WTC11 (cell line): ENCODE measurements at regions of chr11 and their contacts with region 1.

Region 1: DNA sequence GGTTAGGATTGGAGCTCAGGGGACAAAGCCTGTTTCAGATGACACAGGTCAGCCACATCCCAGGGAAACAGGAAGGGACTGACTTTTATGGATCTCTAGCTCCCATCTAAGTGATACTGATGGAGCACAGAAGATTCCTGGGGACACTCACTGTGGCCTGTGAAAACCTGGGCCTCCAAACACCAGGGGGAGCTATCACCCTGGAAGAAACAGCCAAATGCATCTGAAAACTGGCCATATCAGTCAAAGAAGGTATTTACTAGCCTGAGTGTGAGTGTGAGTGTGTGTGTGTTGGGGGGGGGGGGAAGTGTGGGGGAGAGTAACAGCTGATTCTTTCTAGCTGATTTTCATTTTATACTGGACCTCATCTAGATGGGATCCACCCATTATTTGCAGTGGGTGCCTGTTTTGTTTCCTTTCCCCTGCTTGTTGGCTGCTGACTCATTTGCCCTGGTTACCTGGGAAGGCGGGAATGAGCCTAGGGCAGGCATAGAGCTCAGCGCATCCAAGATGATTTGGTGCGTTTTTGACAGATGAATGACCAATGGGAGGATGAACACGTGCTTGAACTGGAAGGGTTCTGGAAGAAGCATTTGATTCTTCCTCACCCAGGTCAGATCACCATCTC is 284.0 kb downstream of the KIRREL3 start:
- DNase-seq: peak; percentile 74
- ATAC-seq: peak; percentile 79
- H3K4me3 Mint-ChIP-seq: no peak overlapping the region
- H3K27ac Mint-ChIP-seq: no peak overlapping the region
- H3K4me1 Mint-ChIP-seq: peaks cover 24% of the 10 kb centered on the region
- H3K27me3 Mint-ChIP-seq: 0 out of 2 replicates have a peak, but pooled peaks cover 4% of the 10 kb centered on the region
- CTCF ChIP-seq: peak; percentile 56

Region 2: DNA sequence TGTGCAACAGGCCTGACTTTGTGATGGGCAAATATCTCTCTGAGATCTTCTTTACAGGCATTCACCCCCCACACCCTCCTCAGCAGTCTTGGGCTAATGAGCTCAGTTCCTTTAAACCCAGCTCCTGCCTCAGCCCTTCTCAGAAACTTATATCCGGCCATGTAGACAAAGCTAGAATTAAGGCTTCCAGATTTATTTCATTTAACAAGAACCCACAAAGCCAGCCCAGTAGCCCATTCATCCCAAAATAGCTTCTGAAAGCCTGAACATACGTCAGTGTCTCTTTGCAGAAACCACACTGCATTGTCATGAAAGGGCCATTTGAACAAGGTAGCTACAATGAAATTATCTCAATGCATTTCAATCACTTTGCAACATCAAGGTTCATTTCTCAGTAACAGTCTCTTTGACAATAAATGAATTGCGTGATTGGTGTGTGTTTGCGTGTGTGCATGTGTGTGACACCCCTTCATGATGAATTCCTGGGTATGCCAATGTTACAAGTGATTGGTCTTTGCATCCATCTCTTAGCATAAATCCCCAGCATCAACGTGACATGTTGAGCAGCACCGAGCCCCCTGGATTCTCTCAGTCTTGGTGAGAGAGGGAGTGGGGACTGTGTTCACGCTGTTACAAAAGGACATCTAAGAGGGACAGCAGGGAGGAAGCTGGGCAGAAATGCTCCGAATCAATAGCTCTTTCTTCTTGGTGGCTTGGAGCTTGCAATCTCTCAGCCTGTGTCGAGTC is 15.6 kb before region 1 on chr11:
- CTCF ChIA-PET with region 1: interaction called, 16 read pairs
- POLR2A ChIA-PET with region 1: interaction called, 4 read pairs
- DNase-seq: no peak
- ATAC-seq: no peak
- H3K4me3 Mint-ChIP-seq: no peak overlapping the region
- H3K27ac Mint-ChIP-seq: no peak overlapping the region
- H3K4me1 Mint-ChIP-seq: peaks cover 61% of the 10 kb centered on the region
- H3K27me3 Mint-ChIP-seq: peaks cover 3% of the 10 kb centered on the region; the same call in 1 of the 2 replicates
- CTCF ChIP-seq: no peak

Region 3: GRCh38 chr11:126732981-126733380 is 16.4 kb after region 1 on chr11:
- CTCF ChIA-PET with region 1: interaction called, 11 read pairs
- POLR2A ChIA-PET with region 1: no interaction called
- DNase-seq: no peak
- ATAC-seq: no peak
- H3K4me3 Mint-ChIP-seq: no peak overlapping the region
- H3K27ac Mint-ChIP-seq: no peak overlapping the region
- H3K4me1 Mint-ChIP-seq: peaks cover 21% of the 10 kb centered on the region
- H3K27me3 Mint-ChIP-seq: no peaks in the 10 kb centered on the region; the same call in 1 of the 2 replicates
- CTCF ChIP-seq: no peak

Region 4: GRCh38 chr11:126790550-126791081 is 74.0 kb after region 1 on chr11:
- CTCF ChIA-PET with region 1: interaction called, 10 read pairs
- POLR2A ChIA-PET with region 1: no interaction called
- DNase-seq: peak; percentile 34
- ATAC-seq: peak; percentile 92
- H3K4me3 Mint-ChIP-seq: no peak overlapping the region
- H3K27ac Mint-ChIP-seq: no peak overlapping the region
- H3K4me1 Mint-ChIP-seq: peaks cover 27% of the 10 kb centered on the region
- H3K27me3 Mint-ChIP-seq: no peaks in the 10 kb centered on the region
- CTCF ChIP-seq: no peak